ENCODE measurements at regions of chr3 and their contacts with region 1.

Region 1: GRCh38 chr3:20503394-20504082 is 317.5 kb upstream of the SGO1 start:
- DNase-seq: no peak
- H3K4me3 ChIP-seq: no peak overlapping the region
- H3K27ac ChIP-seq: no peak overlapping the region
- H3K4me1 ChIP-seq: no peaks in the 10 kb centered on the region
- H3K27me3 ChIP-seq: no peaks in the 10 kb centered on the region
- CTCF ChIP-seq: no peak
- EP300 ChIP-seq: no peak
- POLR2A ChIP-seq: no peak

Region 2: DNA sequence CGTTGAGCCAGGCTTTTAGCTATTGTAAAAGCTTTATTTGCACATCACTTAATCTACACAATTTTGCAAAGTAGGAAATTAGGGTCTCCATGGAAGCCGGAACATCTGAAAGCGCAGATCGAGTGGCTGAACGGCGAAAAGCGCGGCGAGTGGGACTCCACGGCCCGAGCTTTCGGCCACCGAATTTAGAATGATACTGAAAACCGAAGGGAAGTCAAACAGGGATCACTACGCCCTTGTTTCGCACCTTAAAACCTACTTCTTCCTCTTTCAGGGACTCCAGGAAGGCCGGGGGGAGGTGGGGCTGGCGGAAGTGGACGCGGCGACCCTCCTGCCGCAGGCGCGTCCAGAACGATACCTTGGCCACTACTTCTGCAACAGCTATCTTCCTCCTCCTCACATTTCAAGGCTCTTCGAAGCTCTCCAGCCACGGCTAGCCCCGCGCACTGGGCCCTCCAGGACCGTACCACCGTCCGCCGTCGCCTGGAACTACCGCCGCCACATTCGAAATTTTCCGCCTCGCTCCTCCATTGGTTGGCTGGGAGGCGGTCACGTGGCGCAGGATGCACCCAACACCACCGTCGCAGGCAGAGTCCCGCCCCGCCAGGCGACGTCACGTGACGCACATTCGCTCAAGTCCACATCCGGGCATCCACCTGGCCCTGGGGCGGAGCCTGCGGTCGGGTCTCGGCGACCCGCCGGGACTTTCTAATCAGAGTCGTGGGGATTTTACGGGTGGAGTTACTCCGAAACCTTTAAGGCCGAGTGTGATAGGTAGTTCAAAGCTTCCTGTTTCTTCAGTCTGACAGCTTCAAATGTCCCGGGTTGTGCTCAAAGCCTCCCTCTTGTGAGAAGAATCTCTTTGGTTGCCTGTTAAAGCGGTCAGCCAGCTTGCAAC is 317.6 kb before region 1 on chr3 and contains the start of gene SGO1:
- intact Hi-C with region 1: no loop called
- DNase-seq: peak; percentile 99
- H3K4me3 ChIP-seq: peak within 1 kb of the TSS; percentile 53 to 69 (median 63)
- H3K27ac ChIP-seq: peak within 1 kb of the TSS; percentile 86 to 91 (median 87)
- H3K4me1 ChIP-seq: peaks cover 0 to 18% (median 11%) of the 10 kb centered on the region in 4 donors
- H3K27me3 ChIP-seq: no peaks in the 10 kb centered on the region
- CTCF ChIP-seq: no peak
- EP300 ChIP-seq: peak in 1 of 4 donors; percentile 42
- POLR2A ChIP-seq: peak; percentile 79 to 89
- total RNA-seq, gene SGO1: 0.16 to 1.4 TPM in 2 of 4 donors, not detected in the others

Region 3: GRCh38 chr3:20442846-20443245 is 60.7 kb before region 1 on chr3:
- intact Hi-C with region 1: no loop called
- DNase-seq: no peak
- H3K4me3 ChIP-seq: no peak overlapping the region
- H3K27ac ChIP-seq: no peak overlapping the region
- H3K4me1 ChIP-seq: no peaks in the 10 kb centered on the region
- H3K27me3 ChIP-seq: no peaks in the 10 kb centered on the region
- CTCF ChIP-seq: no peak
- EP300 ChIP-seq: no peak
- POLR2A ChIP-seq: no peak

Region 4: DNA sequence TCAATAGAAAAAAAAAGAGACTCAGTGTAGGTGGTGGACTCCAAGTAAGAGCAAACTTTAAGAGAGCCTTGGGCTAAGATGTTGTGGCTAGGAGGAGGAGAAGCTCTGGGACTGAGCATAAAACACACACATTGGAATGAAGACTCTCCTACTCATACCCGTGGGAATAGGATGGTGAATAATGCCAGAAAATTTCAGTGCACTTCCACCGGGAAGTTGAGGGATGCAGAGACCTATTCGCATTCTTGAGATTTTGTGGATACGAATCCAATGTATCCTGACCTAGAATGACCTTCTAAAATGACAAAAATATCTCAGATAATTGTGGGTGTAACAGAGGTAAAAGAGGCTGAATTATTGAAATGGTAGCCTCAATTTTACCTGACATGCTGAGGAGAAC is 71.2 kb after region 1 on chr3:
- intact Hi-C with region 1: no loop called
- DNase-seq: no peak
- H3K4me3 ChIP-seq: no peak overlapping the region
- H3K27ac ChIP-seq: no peak overlapping the region
- H3K4me1 ChIP-seq: no peaks in the 10 kb centered on the region
- H3K27me3 ChIP-seq: no peaks in the 10 kb centered on the region
- CTCF ChIP-seq: no peak
- EP300 ChIP-seq: no peak
- POLR2A ChIP-seq: no peak

Region 5: DNA sequence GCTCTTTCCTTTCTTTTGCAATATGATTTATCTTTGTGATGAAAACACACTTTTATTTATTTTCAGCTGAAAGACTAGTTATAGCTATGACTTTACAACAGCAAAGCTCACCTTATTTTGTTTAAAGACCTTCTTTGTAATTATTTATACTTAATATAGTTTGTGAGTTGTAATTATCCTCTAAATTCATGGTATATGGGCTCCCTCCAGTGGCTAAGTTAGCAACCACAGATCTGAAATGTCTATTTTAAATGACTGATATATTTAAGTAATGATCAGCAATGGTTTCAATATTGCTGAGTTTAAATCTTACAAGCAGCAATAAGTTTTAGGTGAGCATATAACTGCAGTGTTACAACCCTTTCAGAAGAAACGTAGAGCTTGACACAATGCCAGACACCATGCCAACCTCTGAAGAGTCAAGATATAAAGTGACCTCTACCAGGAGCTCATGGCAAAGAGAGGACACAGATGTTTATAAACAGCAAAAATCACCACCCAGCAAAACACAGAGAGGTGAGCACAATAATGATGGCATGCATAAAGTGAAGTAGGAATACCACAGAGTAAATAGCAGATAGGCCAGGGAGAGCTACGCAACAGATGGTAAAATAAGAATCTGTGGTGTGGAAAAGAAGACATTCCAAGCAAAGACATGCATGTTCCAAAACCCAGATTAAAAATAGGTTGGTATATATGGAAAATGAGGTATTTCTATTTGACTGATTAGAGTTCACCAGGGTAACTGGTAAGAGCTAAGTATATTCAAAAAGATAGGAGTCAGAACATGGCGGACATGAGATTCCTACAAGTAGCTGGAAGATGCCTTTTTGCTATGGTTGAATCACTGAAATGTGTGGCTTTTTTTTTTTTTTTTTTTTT is 1391.2 kb after region 1 on chr3:
- intact Hi-C with region 1: loop called (anchors 10 kb)
- DNase-seq: no peak
- H3K4me3 ChIP-seq: no peak overlapping the region
- H3K27ac ChIP-seq: no peak overlapping the region
- H3K4me1 ChIP-seq: peaks cover 0 to 19% (median 3%) of the 10 kb centered on the region in 4 donors
- H3K27me3 ChIP-seq: no peaks in the 10 kb centered on the region
- CTCF ChIP-seq: peak in 1 of 4 experiments; percentile 37
- EP300 ChIP-seq: no peak
- POLR2A ChIP-seq: no peak